Naive thymus-derived CD4-positive, alpha-beta T cell (primary cell): ENCODE measurements at regions of chr1 and their contacts with region 1.

Region 1: DNA sequence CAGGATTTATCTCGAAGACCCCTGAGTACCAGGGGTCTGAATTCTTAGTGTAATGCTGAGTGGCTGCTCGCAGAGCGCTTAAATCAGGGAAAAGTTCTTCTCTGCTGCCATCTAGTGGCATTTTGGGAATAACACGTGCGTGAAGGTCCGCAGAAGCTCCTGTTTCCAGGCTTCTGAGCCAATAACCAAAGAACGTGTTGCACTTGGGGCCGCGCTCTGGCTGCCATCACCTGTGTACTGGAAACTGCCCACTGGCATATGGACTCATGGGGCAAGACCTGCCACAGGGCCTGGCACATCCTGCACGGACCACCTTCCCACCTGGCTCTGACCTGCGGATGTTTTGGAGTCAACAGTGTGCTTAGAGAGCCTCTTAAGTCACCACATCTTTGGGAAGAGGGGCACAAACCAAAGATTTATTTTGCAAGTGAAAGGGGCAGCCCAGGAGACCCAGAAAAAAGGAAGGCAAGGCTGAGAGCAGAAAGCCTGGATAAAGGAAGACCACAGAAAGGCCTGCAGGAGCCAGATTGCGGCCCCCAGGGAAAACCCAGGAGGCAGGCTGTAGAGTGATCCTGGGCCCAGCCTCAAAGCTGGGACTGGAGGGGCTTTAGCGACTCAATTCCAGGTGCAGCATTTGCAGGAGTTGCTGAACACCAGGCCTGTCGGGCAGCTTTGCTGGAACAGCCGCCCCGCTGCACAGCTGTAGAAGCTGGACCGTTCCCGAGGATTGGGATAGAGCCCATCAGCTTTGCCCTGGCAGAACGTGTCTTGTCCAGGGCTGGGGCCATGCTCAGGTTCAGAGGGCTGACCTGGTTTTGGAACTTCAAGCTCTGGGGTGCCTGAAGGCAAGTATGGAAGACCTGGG is 13.0 kb downstream of the CHIT1 start:
- DNase-seq: peak in 8 of 9 donors; percentile 20 to 64 (median 50)
- ATAC-seq: peak; percentile 50
- H3K4me3 ChIP-seq: no peak overlapping the region
- H3K4me3 Mint-ChIP-seq: no peak overlapping the region
- H3K27ac ChIP-seq: no peak overlapping the region
- H3K27ac Mint-ChIP-seq: no peak overlapping the region
- H3K4me1 ChIP-seq: no peaks in the 10 kb centered on the region
- H3K4me1 Mint-ChIP-seq: peaks cover 2 to 8% (median 6%) of the 10 kb centered on the region in 7 donors
- H3K27me3 ChIP-seq: peaks cover 0 to 3% of the 10 kb centered on the region in 2 donors
- H3K27me3 Mint-ChIP-seq: peaks cover 0 to 26% (median 10%) of the 10 kb centered on the region in 5 donors

Region 2: GRCh38 chr1:203117611-203118575 is 98.6 kb before region 1 on chr1:
- CTCF ChIA-PET with region 1: interaction called, 4 read pairs
- POLR2A ChIA-PET with region 1: no interaction called
- intact Hi-C with region 1: loop called (anchors 2 to 5 kb)
- DNase-seq: peak in 2 of 9 donors; percentile 3 to 46
- ATAC-seq: peak; percentile 58
- H3K4me3 ChIP-seq: no peak overlapping the region
- H3K4me3 Mint-ChIP-seq: no peak overlapping the region
- H3K27ac ChIP-seq: no peak overlapping the region
- H3K27ac Mint-ChIP-seq: no peak overlapping the region
- H3K4me1 ChIP-seq: no peaks in the 10 kb centered on the region
- H3K4me1 Mint-ChIP-seq: peaks cover 0 to 10% (median 0%) of the 10 kb centered on the region in 7 donors
- H3K27me3 ChIP-seq: peaks cover 0 to 6% of the 10 kb centered on the region in 2 donors
- H3K27me3 Mint-ChIP-seq: peaks cover 42 to 65% (median 49%) of the 10 kb centered on the region in 5 donors